Heart left ventricle (tissue), 16 donors: ENCODE measurements at regions of chr12 and their contacts with region 1.

Region 1: GRCh38 chr12:110501752-110502738 is at the starts of genes RAD9B and VPS29:
- DNase-seq: peak; percentile 98 to 99 (median 98)
- ATAC-seq: peak; percentile 98 to 99 (median 99)
- H3K4me3 ChIP-seq: peak within 1 kb of the TSS; percentile 65 to 98 (median 89)
- H3K27ac ChIP-seq: peak within 1 kb of the TSS; percentile 64 to 96 (median 90)
- H3K4me1 ChIP-seq: peaks cover 0 to 40% (median 29%) of the 10 kb centered on the region in 12 donors
- H3K27me3 ChIP-seq: no peaks in the 10 kb centered on the region
- CTCF ChIP-seq: no peak
- POLR2A ChIP-seq: peak in 1 of 2 donors; percentile 87
- total RNA-seq, gene RAD9B: 0.67 to 4.8 (median 2.4) TPM in 7 of 9 donors, not detected in the others
- total RNA-seq, gene VPS29: 66.7 to 149 (median 89.5) TPM

Region 2: GRCh38 chr12:110449799-110450497 is 52.1 kb before region 1 on chr12 and contains the start of gene ARPC3:
- intact Hi-C with region 1: loop called in 3 of 10 experiments (anchors 5 kb)
- DNase-seq: peak; percentile 94 to 97 (median 95)
- ATAC-seq: peak; percentile 98 to 99 (median 99)
- H3K4me3 ChIP-seq: peak within 1 kb of the TSS; percentile 62 to 96 (median 85)
- H3K27ac ChIP-seq: peak within 1 kb of the TSS; percentile 74 to 99 (median 92)
- H3K4me1 ChIP-seq: peaks cover 0 to 46% (median 14%) of the 10 kb centered on the region in 12 donors
- H3K27me3 ChIP-seq: no peaks in the 10 kb centered on the region
- CTCF ChIP-seq: peak; percentile 76 to 96 (median 86)
- POLR2A ChIP-seq: peak in 1 of 2 donors; percentile 73
- total RNA-seq, gene ARPC3: 77.2 to 251 (median 108) TPM